ENCODE measurements at regions of chr11 and their contacts with region 1.

Region 1: DNA sequence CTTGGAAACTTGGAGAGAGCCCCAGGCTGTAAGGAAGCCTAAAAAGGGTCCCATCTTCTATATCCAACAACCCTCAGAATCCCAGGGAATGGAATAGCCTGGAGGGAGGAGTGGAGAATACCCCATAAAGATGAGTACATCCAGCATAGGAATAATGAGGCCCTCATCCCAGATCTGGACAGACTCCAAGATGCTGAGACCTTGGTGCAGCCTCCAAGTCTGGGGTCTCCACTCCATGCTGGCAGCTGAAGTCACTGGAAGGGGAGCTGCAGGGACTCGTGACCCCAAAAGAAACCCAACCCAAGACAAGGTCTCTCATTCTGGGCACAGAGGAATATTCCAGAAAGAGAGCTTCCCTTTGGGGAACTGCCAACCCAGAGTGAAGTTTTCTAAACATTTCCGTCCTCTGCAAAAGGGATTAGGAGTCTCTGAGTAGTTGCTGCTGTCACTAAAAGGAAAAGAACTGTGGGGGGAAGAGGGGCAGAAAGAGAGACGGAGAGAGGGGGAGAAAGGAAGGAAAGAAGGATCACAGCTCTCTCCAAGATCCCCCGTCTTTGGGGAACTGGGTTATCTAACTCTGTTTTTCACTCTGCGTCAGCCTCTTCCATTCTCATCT is 589 bp downstream of the SCGB1A1 start:
- DNase-seq: no peak
- ATAC-seq: no peak
- H3K4me3 Mint-ChIP-seq: no peak overlapping the region
- H3K27ac Mint-ChIP-seq: no peak overlapping the region
- H3K4me1 Mint-ChIP-seq: peaks cover 2% of the 10 kb centered on the region
- H3K27me3 Mint-ChIP-seq: peaks cover 9% of the 10 kb centered on the region

Region 2: DNA sequence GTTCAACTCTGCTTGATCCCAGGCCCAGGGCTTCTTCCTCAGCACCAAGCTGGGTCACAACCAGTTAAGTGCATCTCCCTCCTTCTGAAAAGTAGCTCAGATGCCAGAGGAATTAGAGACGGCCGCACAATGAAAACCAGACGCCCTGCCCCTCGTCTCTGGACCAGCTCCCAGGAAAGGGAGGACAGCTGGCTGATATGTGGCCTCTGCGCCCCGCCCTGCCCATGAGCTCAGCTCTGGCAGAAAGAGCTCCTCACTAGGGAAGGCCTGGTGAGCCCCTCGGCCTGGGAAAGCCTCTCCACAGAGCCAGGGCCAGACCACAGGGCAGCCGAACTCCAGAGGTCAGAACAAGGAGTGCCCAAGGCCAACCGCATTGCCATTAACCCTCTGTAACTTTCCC is 18.7 kb before region 1 on chr11:
- CTCF ChIA-PET with region 1: interaction called, 73 read pairs
- DNase-seq: no peak
- ATAC-seq: no peak
- H3K4me3 Mint-ChIP-seq: no peak overlapping the region
- H3K27ac Mint-ChIP-seq: no peak overlapping the region
- H3K4me1 Mint-ChIP-seq: peaks cover 22% of the 10 kb centered on the region
- H3K27me3 Mint-ChIP-seq: no peaks in the 10 kb centered on the region

Region 3: GRCh38 chr11:62497132-62497915 is 77.9 kb after region 1 on chr11:
- CTCF ChIA-PET with region 1: interaction called, 26 read pairs
- DNase-seq: peak; percentile 53
- ATAC-seq: peak; percentile 36
- H3K4me3 Mint-ChIP-seq: no peak overlapping the region
- H3K27ac Mint-ChIP-seq: no peak overlapping the region
- H3K4me1 Mint-ChIP-seq: peaks cover 8% of the 10 kb centered on the region
- H3K27me3 Mint-ChIP-seq: peaks cover 5% of the 10 kb centered on the region

Region 4: DNA sequence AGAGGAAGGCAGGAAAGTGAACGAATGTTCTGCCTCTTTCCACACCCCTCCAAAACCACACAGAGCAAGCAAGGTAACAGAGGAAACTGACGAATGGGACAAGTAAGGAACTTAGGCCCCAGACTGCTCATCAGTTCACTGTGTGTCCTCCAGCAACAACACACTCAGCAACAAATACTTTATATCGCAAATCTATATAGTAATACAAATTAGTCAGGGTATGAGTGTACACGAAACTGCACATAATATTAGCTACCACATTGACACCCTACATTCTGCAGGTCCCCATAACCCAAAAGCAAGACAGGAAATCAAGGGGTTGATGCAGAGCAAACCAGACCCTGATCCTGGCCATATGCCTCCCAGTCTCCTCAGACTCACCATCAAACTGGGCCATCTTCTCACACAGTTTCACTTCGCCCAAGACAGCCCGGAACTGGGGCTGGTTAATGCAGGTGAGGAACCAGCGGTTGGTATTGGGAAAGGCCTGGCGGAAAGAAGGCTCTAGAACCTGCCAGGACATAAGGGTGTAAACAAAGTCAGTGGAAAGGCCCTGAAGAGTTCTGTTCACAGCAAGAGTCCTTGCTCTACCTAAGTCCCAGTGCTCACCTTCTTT is 147.7 kb after region 1 on chr11:
- CTCF ChIA-PET with region 1: interaction called, 207 read pairs
- DNase-seq: no peak
- ATAC-seq: peak; percentile 54
- H3K4me3 Mint-ChIP-seq: no peak overlapping the region
- H3K27ac Mint-ChIP-seq: peak overlapping the region; percentile 86
- H3K4me1 Mint-ChIP-seq: peaks cover 67% of the 10 kb centered on the region
- H3K27me3 Mint-ChIP-seq: no peaks in the 10 kb centered on the region

Region 5: GRCh38 chr11:62627714-62628113 is 208.3 kb after region 1 on chr11:
- CTCF ChIA-PET with region 1: no interaction called
- DNase-seq: no peak
- ATAC-seq: no peak
- H3K4me3 Mint-ChIP-seq: no peak overlapping the region
- H3K27ac Mint-ChIP-seq: no peak overlapping the region
- H3K4me1 Mint-ChIP-seq: no peaks in the 10 kb centered on the region
- H3K27me3 Mint-ChIP-seq: no peaks in the 10 kb centered on the region